B cell (primary cell): ENCODE measurements at regions of chr6 and their contacts with region 1.

Region 1: DNA sequence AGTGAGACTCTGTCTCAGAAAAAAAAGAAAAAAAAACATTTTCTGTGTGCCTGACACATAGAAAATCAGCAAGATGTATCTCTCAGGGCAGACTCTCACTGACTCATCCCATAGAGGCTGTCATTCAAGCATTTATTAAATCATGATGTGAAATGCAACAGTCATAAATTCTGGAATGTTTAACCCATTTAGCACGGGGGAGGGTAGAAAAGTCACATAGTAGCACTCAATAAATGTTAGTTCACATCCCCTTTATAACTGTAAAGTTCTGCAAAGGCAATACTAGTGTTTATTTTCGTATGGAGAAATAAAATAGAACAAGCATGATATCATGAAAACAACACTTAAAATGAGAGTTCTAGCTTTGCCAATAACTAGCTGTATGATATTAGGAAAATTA is 15.5 kb upstream of the CARMIL1 start:
- DNase-seq: no peak
- ATAC-seq: no peak
- H3K4me3 ChIP-seq: no peak overlapping the region
- H3K4me3 Mint-ChIP-seq: no peak overlapping the region
- H3K27ac ChIP-seq: no peak overlapping the region
- H3K27ac Mint-ChIP-seq: no peak overlapping the region
- H3K4me1 ChIP-seq: no peaks in the 10 kb centered on the region
- H3K4me1 Mint-ChIP-seq: peaks cover 2% of the 10 kb centered on the region
- H3K27me3 ChIP-seq: no peaks in the 10 kb centered on the region
- H3K27me3 Mint-ChIP-seq: peaks cover 3% of the 10 kb centered on the region
- CTCF ChIP-seq: no peak

Region 2: DNA sequence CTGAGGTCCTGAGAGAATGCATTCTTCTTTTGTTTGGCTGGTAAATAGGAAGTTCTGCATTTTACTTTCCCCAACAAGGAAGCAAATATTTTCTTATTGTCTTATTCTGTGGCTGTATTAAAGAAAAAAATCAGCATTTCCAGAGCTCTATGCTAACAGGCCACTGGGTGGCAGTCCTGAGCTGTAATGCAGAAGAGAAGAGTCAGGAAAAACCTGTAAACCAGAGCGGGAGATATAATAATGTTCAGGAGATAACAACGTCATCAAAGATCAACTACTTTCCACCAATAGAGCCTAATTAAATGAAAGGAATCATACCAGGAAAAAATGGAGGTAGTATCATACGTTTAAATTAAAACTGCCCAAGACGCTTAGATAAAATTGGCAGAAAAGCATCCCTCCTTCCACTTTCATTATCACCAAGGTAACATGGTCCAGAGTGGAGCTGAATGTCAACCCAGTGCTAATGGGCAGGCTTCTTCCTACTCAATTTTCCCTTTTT is 40.1 kb before region 1 on chr6:
- CTCF ChIA-PET with region 1: interaction called, 18 read pairs
- POLR2A ChIA-PET with region 1: no interaction called
- intact Hi-C with region 1: no loop called
- DNase-seq: peak; percentile 74
- ATAC-seq: peak; percentile 49
- H3K4me3 ChIP-seq: peak overlapping the region in 3 of 5 experiments; percentile 1 to 50 (median 24)
- H3K4me3 Mint-ChIP-seq: peak overlapping the region; percentile 42
- H3K27ac ChIP-seq: no peak overlapping the region
- H3K27ac Mint-ChIP-seq: no peak overlapping the region
- H3K4me1 ChIP-seq: peaks cover 0 to 3% of the 10 kb centered on the region in 2 donors
- H3K4me1 Mint-ChIP-seq: peaks cover 7% of the 10 kb centered on the region
- H3K27me3 ChIP-seq: peaks cover 0 to 3% (median 0%) of the 10 kb centered on the region in 4 experiments
- H3K27me3 Mint-ChIP-seq: peaks cover 13% of the 10 kb centered on the region
- CTCF ChIP-seq: peak; percentile 98

Region 3: GRCh38 chr6:25278914-25279747 is 15.5 kb after region 1 on chr6 and contains the start of gene CARMIL1:
- CTCF ChIA-PET with region 1: interaction called, 48 read pairs
- POLR2A ChIA-PET with region 1: interaction called, 4 read pairs
- intact Hi-C with region 1: no loop called
- DNase-seq: peak; percentile 79
- ATAC-seq: peak; percentile 82
- H3K4me3 ChIP-seq: peak within 1 kb of the TSS; percentile 61 to 86 (median 83)
- H3K4me3 Mint-ChIP-seq: peak within 1 kb of the TSS; percentile 96
- H3K27ac ChIP-seq: peak within 1 kb of the TSS; percentile 39 to 66
- H3K27ac Mint-ChIP-seq: peak within 1 kb of the TSS; percentile 89
- H3K4me1 ChIP-seq: peaks cover 23 to 30% of the 10 kb centered on the region in 2 donors
- H3K4me1 Mint-ChIP-seq: peaks cover 34% of the 10 kb centered on the region
- H3K27me3 ChIP-seq: no peaks in the 10 kb centered on the region
- H3K27me3 Mint-ChIP-seq: peaks cover 5% of the 10 kb centered on the region
- CTCF ChIP-seq: peak; percentile 53
- total RNA-seq, gene CARMIL1: 7.5 and 9.0 TPM in 2 replicates

Region 4: DNA sequence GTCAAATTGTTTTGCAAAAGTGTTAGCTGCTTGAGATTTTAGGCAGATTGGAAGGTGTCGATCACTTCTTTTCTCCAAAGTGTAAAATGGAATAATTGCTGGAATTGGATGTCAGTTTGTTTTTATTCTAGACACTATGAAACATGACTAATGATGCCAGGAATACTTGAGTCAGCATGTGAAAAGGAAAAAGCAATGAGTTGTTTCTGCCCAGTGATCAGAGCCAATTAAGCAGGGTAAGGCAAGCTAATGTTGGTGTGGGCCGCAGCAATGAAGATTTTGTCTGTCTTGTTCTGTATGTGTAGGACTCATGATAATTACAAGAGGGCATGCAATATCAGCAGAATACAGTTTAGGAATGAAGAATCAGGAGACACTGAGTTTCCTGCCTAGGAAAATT is 125.8 kb after region 1 on chr6:
- CTCF ChIA-PET with region 1: no interaction called
- POLR2A ChIA-PET with region 1: no interaction called
- intact Hi-C with region 1: no loop called
- DNase-seq: no peak
- ATAC-seq: no peak
- H3K4me3 ChIP-seq: no peak overlapping the region
- H3K4me3 Mint-ChIP-seq: no peak overlapping the region
- H3K27ac ChIP-seq: no peak overlapping the region
- H3K27ac Mint-ChIP-seq: no peak overlapping the region
- H3K4me1 ChIP-seq: peaks cover 23 to 24% of the 10 kb centered on the region in 2 donors
- H3K4me1 Mint-ChIP-seq: peaks cover 23% of the 10 kb centered on the region
- H3K27me3 ChIP-seq: no peaks in the 10 kb centered on the region
- H3K27me3 Mint-ChIP-seq: peaks cover 4% of the 10 kb centered on the region
- CTCF ChIP-seq: no peak

Region 5: DNA sequence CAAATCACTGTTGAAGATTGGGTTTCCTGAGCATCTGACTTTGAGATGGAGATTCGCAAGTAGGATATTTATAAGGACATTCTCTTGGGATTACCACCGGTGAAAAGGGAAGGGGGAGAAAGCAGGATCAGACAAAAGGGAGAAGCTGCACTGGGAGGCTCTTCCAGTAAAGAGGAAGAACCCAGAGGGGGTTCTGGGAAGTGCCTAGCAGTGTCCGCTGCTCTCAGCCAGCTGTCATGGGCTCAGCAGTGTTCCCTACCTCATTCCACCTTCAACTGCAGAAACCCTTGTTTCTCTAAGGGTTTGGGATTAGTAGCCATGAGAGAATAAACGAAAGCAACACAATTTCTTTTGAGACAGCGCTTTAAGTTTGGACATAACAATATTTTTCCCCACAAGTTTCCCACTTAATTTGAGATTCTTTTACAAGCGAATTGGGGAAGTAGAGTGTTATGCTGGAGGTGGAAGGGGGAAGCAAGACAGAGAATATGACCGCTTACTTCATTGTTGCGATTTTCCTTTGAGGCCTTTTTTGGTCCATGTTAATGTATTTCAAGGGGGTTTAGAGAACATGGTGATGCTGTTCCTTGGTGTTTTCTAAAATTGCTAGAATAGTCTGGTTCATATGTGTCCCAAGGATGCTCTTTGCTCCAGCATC is 233.9 kb after region 1 on chr6:
- CTCF ChIA-PET with region 1: interaction called, 353 read pairs
- POLR2A ChIA-PET with region 1: no interaction called
- intact Hi-C with region 1: no loop called
- DNase-seq: no peak
- ATAC-seq: no peak
- H3K4me3 ChIP-seq: no peak overlapping the region
- H3K4me3 Mint-ChIP-seq: no peak overlapping the region
- H3K27ac ChIP-seq: no peak overlapping the region
- H3K27ac Mint-ChIP-seq: no peak overlapping the region
- H3K4me1 ChIP-seq: no peaks in the 10 kb centered on the region
- H3K4me1 Mint-ChIP-seq: no peaks in the 10 kb centered on the region
- H3K27me3 ChIP-seq: no peaks in the 10 kb centered on the region
- H3K27me3 Mint-ChIP-seq: no peaks in the 10 kb centered on the region
- CTCF ChIP-seq: no peak

Region 6: GRCh38 chr6:25601800-25602673 is 338.4 kb after region 1 on chr6:
- CTCF ChIA-PET with region 1: interaction called, 29 read pairs
- POLR2A ChIA-PET with region 1: no interaction called
- intact Hi-C with region 1: loop called (anchors 1 kb)
- DNase-seq: peak; percentile 62
- ATAC-seq: no peak
- H3K4me3 ChIP-seq: no peak overlapping the region
- H3K4me3 Mint-ChIP-seq: no peak overlapping the region
- H3K27ac ChIP-seq: no peak overlapping the region
- H3K27ac Mint-ChIP-seq: no peak overlapping the region
- H3K4me1 ChIP-seq: no peaks in the 10 kb centered on the region
- H3K4me1 Mint-ChIP-seq: no peaks in the 10 kb centered on the region
- H3K27me3 ChIP-seq: no peaks in the 10 kb centered on the region
- H3K27me3 Mint-ChIP-seq: peaks cover 8% of the 10 kb centered on the region
- CTCF ChIP-seq: peak; percentile 89